Activated CD4-positive, alpha-beta memory T cell treated with anti-CD3 and anti-CD28 coated beads for 36 hours (primary cell): ENCODE measurements at regions of chr15 and their contacts with region 1.

Region 1: GRCh38 chr15:38699633-38700230 is 135.1 kb upstream of the RASGRP1 start:
- DNase-seq: peak; percentile 84
- H3K4me3 Mint-ChIP-seq: peak overlapping the region; percentile 50
- H3K27ac Mint-ChIP-seq: peak overlapping the region; percentile 83
- H3K4me1 Mint-ChIP-seq: peaks cover 55% of the 10 kb centered on the region
- H3K27me3 Mint-ChIP-seq: no peaks in the 10 kb centered on the region

Region 2: GRCh38 chr15:38440353-38441129 is 259.2 kb before region 1 on chr15:
- CTCF ChIA-PET with region 1: interaction called, 266 read pairs
- POLR2A ChIA-PET with region 1: no interaction called
- intact Hi-C with region 1: loop called (anchors 1 kb)
- DNase-seq: peak; percentile 60
- H3K4me3 Mint-ChIP-seq: no peak overlapping the region
- H3K27ac Mint-ChIP-seq: peak overlapping the region; percentile 6
- H3K4me1 Mint-ChIP-seq: peaks cover 5% of the 10 kb centered on the region
- H3K27me3 Mint-ChIP-seq: peaks cover 11% of the 10 kb centered on the region

Region 3: DNA sequence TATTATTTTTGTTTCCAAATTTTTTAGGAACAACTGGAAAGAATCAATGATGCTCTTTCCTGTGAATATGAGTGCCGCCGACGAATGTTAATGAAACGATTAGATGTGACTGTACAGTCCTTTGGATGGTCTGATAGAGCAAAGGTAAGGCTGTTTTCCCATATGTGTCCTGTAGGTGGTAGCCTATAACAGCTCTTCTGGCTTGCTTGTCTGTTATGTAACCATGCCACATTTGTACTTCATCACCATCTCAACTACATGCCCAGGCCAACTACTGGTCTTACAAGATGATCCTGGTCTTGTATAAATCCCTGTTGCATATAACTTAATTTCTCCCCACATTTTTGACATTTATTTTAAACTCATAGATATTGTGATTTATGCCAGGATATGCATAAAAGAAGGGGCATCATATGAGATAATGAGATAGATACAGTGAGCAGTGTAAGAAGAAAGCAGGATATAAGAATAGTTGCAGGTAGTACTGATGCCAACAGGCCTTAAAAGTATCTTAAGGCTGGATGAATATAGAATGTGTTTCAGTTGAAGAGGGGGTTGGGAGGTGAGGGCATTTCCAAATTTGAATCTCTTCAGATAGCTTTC is 225.5 kb before region 1 on chr15:
- CTCF ChIA-PET with region 1: interaction called, 84 read pairs
- POLR2A ChIA-PET with region 1: no interaction called
- intact Hi-C with region 1: loop called (anchors 1 kb)
- DNase-seq: no peak
- H3K4me3 Mint-ChIP-seq: no peak overlapping the region
- H3K27ac Mint-ChIP-seq: no peak overlapping the region
- H3K4me1 Mint-ChIP-seq: peaks cover 9% of the 10 kb centered on the region
- H3K27me3 Mint-ChIP-seq: no peaks in the 10 kb centered on the region

Region 4: GRCh38 chr15:38610748-38611147 is 89.0 kb before region 1 on chr15:
- CTCF ChIA-PET with region 1: interaction called, 11 read pairs
- POLR2A ChIA-PET with region 1: interaction called, 23 read pairs
- intact Hi-C with region 1: no loop called
- DNase-seq: peak; percentile 80
- H3K4me3 Mint-ChIP-seq: peak overlapping the region; percentile 37
- H3K27ac Mint-ChIP-seq: peak overlapping the region; percentile 99
- H3K4me1 Mint-ChIP-seq: peaks cover 83% of the 10 kb centered on the region
- H3K27me3 Mint-ChIP-seq: no peaks in the 10 kb centered on the region

Region 5: DNA sequence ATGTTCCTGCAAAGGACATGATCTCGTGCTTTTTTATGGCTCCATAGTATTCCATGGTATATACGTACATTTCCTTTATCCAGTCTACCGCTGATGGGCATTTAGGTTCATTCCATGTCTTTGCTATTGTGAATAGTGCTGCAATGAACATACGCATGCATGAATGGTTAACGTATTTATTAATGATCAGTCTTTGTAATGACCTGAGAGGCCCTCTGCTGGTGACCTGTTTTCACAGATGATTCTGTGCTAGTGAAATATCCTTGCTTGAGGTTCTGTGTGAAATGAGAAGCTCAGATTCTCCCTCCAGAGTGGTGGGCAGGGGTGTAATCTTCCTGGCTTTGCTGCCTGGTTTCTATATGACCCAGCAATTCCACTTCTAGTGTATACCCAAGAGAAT is 25.1 kb after region 1 on chr15:
- CTCF ChIA-PET with region 1: interaction called, 10 read pairs
- POLR2A ChIA-PET with region 1: no interaction called
- intact Hi-C with region 1: no loop called
- DNase-seq: no peak
- H3K4me3 Mint-ChIP-seq: no peak overlapping the region
- H3K27ac Mint-ChIP-seq: no peak overlapping the region
- H3K4me1 Mint-ChIP-seq: no peaks in the 10 kb centered on the region
- H3K27me3 Mint-ChIP-seq: peaks cover 2% of the 10 kb centered on the region